Activated naive CD4-positive, alpha-beta T cell treated with anti-CD3 and anti-CD28 coated beads for 36 hours (primary cell): ENCODE measurements at regions of chr12 and their contacts with region 1.

Region 1: GRCh38 chr12:76183459-76184186 is 99.1 kb upstream of the NAP1L1 start:
- DNase-seq: peak; percentile 76
- H3K4me3 Mint-ChIP-seq: no peak overlapping the region
- H3K27ac Mint-ChIP-seq: no peak overlapping the region
- H3K4me1 Mint-ChIP-seq: peaks cover 12% of the 10 kb centered on the region
- H3K27me3 Mint-ChIP-seq: peaks cover 46% of the 10 kb centered on the region

Region 2: GRCh38 chr12:76158518-76159321 is 24.9 kb before region 1 on chr12:
- CTCF ChIA-PET with region 1: no interaction called
- intact Hi-C with region 1: loop called (anchors 1 kb)
- DNase-seq: peak; percentile 73
- H3K4me3 Mint-ChIP-seq: no peak overlapping the region
- H3K27ac Mint-ChIP-seq: no peak overlapping the region
- H3K4me1 Mint-ChIP-seq: peaks cover 10% of the 10 kb centered on the region
- H3K27me3 Mint-ChIP-seq: no peaks in the 10 kb centered on the region

Region 3: DNA sequence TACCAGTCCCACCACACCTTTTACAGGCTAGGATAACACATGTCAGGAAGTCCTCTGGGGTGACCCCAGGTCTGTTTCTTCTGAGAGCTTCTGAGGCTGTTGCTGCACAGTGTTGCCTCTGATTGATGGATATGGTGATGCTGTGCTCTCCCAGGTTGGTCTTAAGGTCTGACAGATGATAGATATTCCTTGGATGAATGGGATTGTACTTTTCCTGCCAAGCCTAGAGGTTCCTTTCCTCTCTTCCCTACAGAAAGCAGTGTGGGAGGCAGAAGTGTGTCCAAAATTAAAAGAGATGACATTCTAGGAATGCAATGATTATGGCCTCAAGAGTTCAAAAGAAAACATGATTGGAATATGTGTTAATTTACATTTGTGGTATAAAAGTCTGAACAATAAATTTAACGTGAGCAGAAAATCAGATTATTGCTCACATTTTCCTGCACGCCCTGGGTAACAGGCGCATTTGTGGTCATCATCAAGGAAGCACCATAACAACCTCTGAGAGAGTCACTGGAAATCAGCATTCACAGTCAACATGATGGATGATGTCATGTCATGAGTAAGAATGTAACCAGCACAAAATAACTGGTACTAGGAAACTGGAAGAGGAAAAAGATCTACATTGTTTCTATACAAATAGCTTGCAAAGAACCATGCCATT is 90.9 kb after region 1 on chr12:
- CTCF ChIA-PET with region 1: no interaction called
- intact Hi-C with region 1: loop called (anchors 1 kb)
- DNase-seq: peak; percentile 58
- H3K4me3 Mint-ChIP-seq: no peak overlapping the region
- H3K27ac Mint-ChIP-seq: peak overlapping the region; percentile 10
- H3K4me1 Mint-ChIP-seq: peaks cover 12% of the 10 kb centered on the region
- H3K27me3 Mint-ChIP-seq: peaks cover 11% of the 10 kb centered on the region